Heart right ventricle (tissue), 16 donors: ENCODE measurements at regions of chr9 and their contacts with region 1.

Region 1: GRCh38 chr9:24832308-24832707 is 286.6 kb upstream of the IZUMO3 start:
- DNase-seq: no peak
- ATAC-seq: no peak
- H3K4me3 ChIP-seq: no peak overlapping the region
- H3K27ac ChIP-seq: no peak overlapping the region
- H3K4me1 ChIP-seq: no peaks in the 10 kb centered on the region
- H3K27me3 ChIP-seq: no peaks in the 10 kb centered on the region
- CTCF ChIP-seq: peak in 2 of 9 donors; percentile 11 to 16

Region 2: DNA sequence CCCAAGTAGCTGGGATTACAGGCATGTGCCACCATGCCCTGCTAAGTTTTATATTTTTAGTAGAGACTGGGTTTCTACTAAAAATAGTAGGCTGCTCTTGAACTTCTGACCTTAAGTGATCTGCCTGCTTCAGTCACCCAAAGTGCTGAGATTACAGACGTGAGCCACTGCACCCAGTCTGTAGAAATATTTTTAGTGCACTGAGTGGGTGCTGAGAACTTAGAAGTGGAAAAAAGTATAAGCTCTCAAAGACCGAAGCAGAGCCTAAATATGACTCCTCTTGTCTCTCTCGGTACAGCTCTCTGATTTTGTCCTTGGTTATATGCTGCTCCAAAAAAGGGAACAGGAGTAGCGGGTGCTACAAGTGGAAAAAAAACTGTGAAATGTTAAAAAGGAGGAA is 67.2 kb after region 1 on chr9:
- intact Hi-C with region 1: no loop called
- DNase-seq: no peak
- ATAC-seq: peak in 2 of 8 donors; percentile 33 to 45
- H3K4me3 ChIP-seq: no peak overlapping the region
- H3K27ac ChIP-seq: no peak overlapping the region
- H3K4me1 ChIP-seq: no peaks in the 10 kb centered on the region
- H3K27me3 ChIP-seq: no peaks in the 10 kb centered on the region
- CTCF ChIP-seq: no peak

Region 3: GRCh38 chr9:26513730-26514129 is 1681.4 kb after region 1 on chr9:
- intact Hi-C with region 1: loop called in 1 of 10 experiments (anchors 5 kb)
- DNase-seq: no peak
- ATAC-seq: no peak
- H3K4me3 ChIP-seq: no peak overlapping the region
- H3K27ac ChIP-seq: no peak overlapping the region
- H3K4me1 ChIP-seq: no peaks in the 10 kb centered on the region
- H3K27me3 ChIP-seq: no peaks in the 10 kb centered on the region
- CTCF ChIP-seq: no peak